Heart left ventricle (tissue), 16 donors: ENCODE measurements at regions of chr1 and their contacts with region 1.

Region 1: GRCh38 chr1:204296431-204296988 is 63.2 kb downstream of the PLEKHA6 start:
- DNase-seq: peak in 4 of 5 donors; percentile 32 to 69 (median 41)
- ATAC-seq: peak in 3 of 4 donors; percentile 49 to 63 (median 62)
- H3K4me3 ChIP-seq: no peak overlapping the region
- H3K27ac ChIP-seq: peak overlapping the region in 11 of 12 donors; percentile 17 to 91 (median 42)
- H3K4me1 ChIP-seq: peaks cover 0 to 76% (median 36%) of the 10 kb centered on the region in 12 donors
- H3K27me3 ChIP-seq: no peaks in the 10 kb centered on the region
- CTCF ChIP-seq: peak in 3 of 12 donors; percentile 5 to 35 (median 21)
- POLR2A ChIP-seq: no peak

Region 2: DNA sequence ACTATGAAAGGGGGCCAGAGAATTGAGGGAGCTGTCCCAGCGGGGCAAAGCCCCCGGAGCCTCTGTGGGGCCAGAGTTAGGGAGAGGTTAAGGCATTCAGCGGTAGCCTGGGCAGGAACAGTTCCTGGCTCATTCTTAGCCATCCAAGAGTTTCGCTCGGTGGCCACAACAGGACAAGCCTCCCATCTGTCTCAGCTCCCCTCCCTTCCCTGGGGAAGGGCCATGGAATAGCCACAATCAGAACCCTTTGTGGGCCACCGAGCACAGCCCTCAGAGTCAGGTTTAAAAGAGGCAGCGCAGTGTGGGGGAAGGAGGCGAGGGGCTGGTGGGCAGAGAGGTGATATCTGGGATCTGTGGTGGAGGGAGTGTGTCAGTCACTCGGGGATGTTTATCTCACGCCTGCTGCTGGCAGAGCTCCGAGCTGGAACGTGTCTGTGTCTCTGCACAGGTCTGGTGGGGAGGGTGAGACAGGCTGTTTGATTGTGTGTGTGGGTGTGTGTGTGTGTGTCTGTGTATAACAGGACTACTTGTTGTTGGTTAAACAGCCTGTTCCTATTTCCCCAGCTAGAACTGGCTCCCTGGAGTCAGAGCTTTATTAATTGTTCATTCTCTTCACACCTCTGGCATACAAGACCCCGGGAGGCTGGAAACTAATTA is 33.1 kb before region 1 on chr1:
- intact Hi-C with region 1: loop called in 2 of 10 experiments (anchors 5 to 10 kb)
- DNase-seq: peak in 1 of 5 donors; percentile 65
- ATAC-seq: peak; percentile 21 to 49 (median 44)
- H3K4me3 ChIP-seq: no peak overlapping the region
- H3K27ac ChIP-seq: peak overlapping the region in 6 of 12 donors; percentile 24 to 65 (median 41)
- H3K4me1 ChIP-seq: peaks cover 0 to 44% (median 28%) of the 10 kb centered on the region in 12 donors
- H3K27me3 ChIP-seq: no peaks in the 10 kb centered on the region
- CTCF ChIP-seq: no peak
- POLR2A ChIP-seq: no peak